ENCODE measurements at regions of chr1 and their contacts with region 1.

Region 1: DNA sequence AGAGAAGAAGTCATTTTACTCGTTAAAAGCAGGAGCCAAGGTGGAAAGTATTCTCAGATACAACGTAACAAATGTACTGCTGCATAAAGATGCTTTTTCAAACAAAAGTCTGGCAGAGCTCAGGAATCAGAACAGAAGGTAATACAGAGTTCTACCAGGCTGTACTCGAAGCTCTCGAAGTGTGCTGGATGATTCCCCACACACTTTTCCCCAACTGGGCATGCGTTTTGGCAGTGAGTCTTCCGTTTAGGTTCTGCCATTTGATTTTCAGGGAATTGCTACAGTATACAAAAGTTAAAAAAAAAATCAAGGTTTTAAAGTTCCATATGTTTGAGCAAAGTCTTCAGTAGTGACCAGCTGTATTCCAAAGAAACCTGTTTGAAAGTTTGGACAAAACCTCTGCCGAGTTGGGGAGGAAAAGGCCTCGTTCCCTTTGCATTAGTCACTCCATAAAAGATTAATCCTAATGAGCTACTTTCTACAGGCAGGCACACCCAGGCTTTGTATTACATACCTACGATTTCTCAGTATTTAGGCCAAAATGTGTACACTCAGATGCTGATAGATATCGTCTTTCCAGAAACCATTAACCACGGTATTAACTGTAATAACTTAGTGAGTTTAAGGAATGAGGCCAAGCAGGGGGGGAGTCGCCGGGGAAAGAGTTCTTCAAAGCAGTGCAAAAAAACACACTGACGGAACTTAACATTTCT is 477.1 kb downstream of the LMO4 start:
- DNase-seq: peak; percentile 27
- ATAC-seq: peak; percentile 59
- H3K4me3 ChIP-seq: peak overlapping the region in 1 of 3 experiments; percentile 26; a peak in 1 of 6 replicates
- H3K27ac ChIP-seq: no peak overlapping the region
- H3K4me1 ChIP-seq: peaks cover 62% of the 10 kb centered on the region
- H3K27me3 ChIP-seq: no peaks in the 10 kb centered on the region
- CTCF ChIP-seq: no peak
- EP300 ChIP-seq: no peak
- POLR2A ChIP-seq: no peak
- RAD21 ChIP-seq: no peak

Region 2: GRCh38 chr1:87778896-87779295 is 26.9 kb before region 1 on chr1:
- CTCF ChIA-PET with region 1: no interaction called
- POLR2A ChIA-PET with region 1: no interaction called
- in situ Hi-C with region 1: no loop called
- intact Hi-C with region 1: no loop called
- DNase-seq: no peak
- ATAC-seq: no peak
- H3K4me3 ChIP-seq: no peak overlapping the region
- H3K27ac ChIP-seq: no peak overlapping the region
- H3K4me1 ChIP-seq: no peaks in the 10 kb centered on the region
- H3K27me3 ChIP-seq: no peaks in the 10 kb centered on the region
- CTCF ChIP-seq: no peak
- EP300 ChIP-seq: no peak
- POLR2A ChIP-seq: no peak
- RAD21 ChIP-seq: no peak

Region 3: GRCh38 chr1:87794788-87795614 is 10.8 kb before region 1 on chr1:
- CTCF ChIA-PET with region 1: no interaction called
- POLR2A ChIA-PET with region 1: interaction called, 19 read pairs
- in situ Hi-C with region 1: no loop called
- intact Hi-C with region 1: no loop called
- DNase-seq: peak; percentile 86
- ATAC-seq: peak; percentile 82
- H3K4me3 ChIP-seq: peak overlapping the region in 1 of 3 experiments; percentile 43; a peak in 1 of 6 replicates
- H3K27ac ChIP-seq: peak overlapping the region; percentile 90
- H3K4me1 ChIP-seq: peaks cover 50% of the 10 kb centered on the region
- H3K27me3 ChIP-seq: no peaks in the 10 kb centered on the region
- CTCF ChIP-seq: no peak
- EP300 ChIP-seq: peak in 1 of 2 experiments; percentile 56; a peak in 2 of 4 replicates
- POLR2A ChIP-seq: no peak
- RAD21 ChIP-seq: no peak

Measured in HepG2 (cell line).